BJ (cell line): ENCODE measurements at regions of chr17 and their contacts with region 1.

Region 1: GRCh38 chr17:57671667-57672632 is 73.1 kb downstream of the CCDC182 start:
- DNase-seq: peak; percentile 13
- H3K4me3 ChIP-seq: no peak overlapping the region
- H3K27me3 ChIP-seq: no peaks in the 10 kb centered on the region
- CTCF ChIP-seq: peak; percentile 99

Region 2: GRCh38 chr17:57385975-57386374 is 286.0 kb before region 1 on chr17:
- CTCF ChIA-PET with region 1: no interaction called
- POLR2A ChIA-PET with region 1: no interaction called
- DNase-seq: no peak
- H3K4me3 ChIP-seq: no peak overlapping the region
- H3K27me3 ChIP-seq: no peaks in the 10 kb centered on the region
- CTCF ChIP-seq: no peak

Region 3: DNA sequence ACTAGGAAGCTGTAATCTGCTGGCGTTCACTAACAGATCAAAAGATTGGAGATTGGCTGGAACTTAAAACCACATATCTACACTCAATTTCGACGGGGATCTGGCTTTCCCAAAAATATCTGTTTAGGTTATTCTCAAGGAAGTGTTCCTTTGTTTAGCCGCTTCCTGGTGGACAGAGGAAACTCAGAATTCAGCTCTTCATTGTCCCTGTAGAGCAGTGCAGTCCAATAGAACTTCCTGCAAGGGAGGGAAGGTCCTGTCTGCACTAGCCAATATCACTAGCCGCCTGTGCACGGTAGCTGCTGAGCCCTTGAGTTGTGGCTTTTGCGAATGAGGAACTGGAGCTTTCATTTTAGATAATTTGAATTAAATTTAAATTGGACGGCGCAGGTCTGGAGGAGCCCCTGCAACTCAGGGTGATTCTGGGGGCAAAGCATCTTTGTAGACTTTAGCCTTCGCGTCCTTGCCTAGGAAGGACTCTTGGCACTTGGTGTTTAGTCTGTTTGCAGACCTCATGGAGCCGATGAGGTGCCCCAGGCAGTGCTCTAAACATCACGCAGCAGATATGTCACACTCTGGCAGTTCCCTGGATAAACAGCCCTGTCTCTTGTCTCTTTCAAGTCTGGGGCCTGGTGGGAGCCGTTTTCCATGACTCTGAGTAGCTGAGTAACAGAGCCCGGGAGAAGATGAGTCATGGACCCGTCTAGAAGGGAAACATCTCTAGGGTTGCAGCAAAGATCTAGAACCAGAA is 49.1 kb before region 1 on chr17:
- CTCF ChIA-PET with region 1: interaction called, 13 read pairs
- POLR2A ChIA-PET with region 1: no interaction called
- DNase-seq: peak; percentile 19
- H3K4me3 ChIP-seq: no peak overlapping the region
- H3K27me3 ChIP-seq: no peaks in the 10 kb centered on the region
- CTCF ChIP-seq: no peak

Region 4: DNA sequence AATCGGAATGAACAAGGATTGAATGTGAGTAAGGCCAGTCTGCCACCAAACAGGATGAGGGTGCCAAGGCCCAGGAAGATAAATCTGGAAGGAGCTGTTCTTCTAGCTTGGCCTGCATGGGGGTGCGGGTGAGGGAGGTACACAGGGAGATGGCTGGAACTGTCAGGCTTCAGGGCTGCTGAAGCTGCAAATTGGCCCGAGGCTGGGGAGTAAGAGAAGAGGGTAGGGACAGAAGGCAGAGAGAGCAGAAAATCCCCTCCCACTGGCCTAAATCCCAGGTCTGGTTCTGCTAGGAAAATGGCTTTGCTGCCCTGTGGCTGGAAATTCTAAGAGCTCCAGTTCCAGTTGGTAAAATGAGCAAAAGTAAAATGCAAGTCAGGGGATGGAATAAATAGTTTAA is 14.7 kb before region 1 on chr17:
- CTCF ChIA-PET with region 1: interaction called, 46 read pairs
- POLR2A ChIA-PET with region 1: no interaction called
- DNase-seq: no peak
- H3K4me3 ChIP-seq: no peak overlapping the region
- H3K27me3 ChIP-seq: no peaks in the 10 kb centered on the region
- CTCF ChIP-seq: no peak

Region 5: GRCh38 chr17:57732062-57732461 is 60.1 kb after region 1 on chr17:
- CTCF ChIA-PET with region 1: no interaction called
- POLR2A ChIA-PET with region 1: no interaction called
- DNase-seq: no peak
- H3K4me3 ChIP-seq: no peak overlapping the region
- H3K27me3 ChIP-seq: peaks cover 4% of the 10 kb centered on the region; the same call in 1 of the 2 replicates
- CTCF ChIP-seq: no peak

Region 6: GRCh38 chr17:58028578-58028977 is 356.6 kb after region 1 on chr17:
- CTCF ChIA-PET with region 1: no interaction called
- POLR2A ChIA-PET with region 1: no interaction called
- DNase-seq: no peak
- H3K4me3 ChIP-seq: no peak overlapping the region
- H3K27me3 ChIP-seq: no peaks in the 10 kb centered on the region
- CTCF ChIP-seq: no peak